ENCODE measurements at regions of chr11 and their contacts with region 1.

Region 1: GRCh38 chr11:79062814-79063762 is 377.7 kb downstream of the TENM4 start:
- DNase-seq: no peak
- H3K4me3 ChIP-seq: no peak overlapping the region
- H3K27ac ChIP-seq: no peak overlapping the region
- H3K4me1 ChIP-seq: peaks cover 0 to 7% (median 2%) of the 10 kb centered on the region in 4 donors
- H3K27me3 ChIP-seq: no peaks in the 10 kb centered on the region
- CTCF ChIP-seq: peak; percentile 17 to 38 (median 21)
- EP300 ChIP-seq: no peak
- POLR2A ChIP-seq: no peak

Region 2: DNA sequence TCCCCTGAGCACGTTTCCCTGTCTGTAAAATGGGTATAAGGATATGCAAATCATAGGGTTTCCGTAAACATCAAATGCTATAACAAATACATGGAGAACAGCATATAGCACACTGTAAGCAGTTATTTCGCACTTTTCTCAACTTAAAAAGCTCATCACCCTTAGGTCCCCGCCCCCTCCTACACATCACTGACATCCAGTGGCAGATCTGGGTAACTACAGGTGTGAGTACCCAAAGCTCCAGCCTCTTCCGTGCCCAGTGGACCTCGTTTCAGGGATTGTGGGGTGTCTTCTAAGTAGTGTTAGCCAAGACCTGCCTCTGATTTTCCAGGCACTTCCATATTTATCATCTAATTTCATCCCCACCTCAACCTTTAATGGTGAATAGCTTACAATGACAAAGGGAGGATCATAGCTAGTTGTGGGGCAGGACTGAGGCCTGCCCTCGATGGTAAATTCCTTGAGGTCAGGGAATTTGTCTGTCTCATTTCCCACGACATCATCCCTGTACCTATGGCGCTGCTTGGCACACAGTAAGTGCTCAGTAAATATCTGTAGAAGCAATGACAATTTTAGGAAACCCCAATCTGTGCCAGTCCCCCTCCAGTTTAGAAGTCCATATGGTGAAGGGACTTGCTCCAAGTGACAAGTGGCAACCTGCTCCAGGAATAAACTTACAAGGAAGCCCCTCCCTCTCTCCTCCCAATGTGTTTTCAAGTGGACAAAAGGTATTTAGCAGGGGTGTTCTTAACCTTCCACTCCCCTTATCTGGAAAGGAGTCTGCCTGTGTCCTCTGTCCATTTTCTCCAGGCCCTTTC is 37.2 kb after region 1 on chr11:
- intact Hi-C with region 1: loop called (anchors 2 kb)
- DNase-seq: no peak
- H3K4me3 ChIP-seq: no peak overlapping the region
- H3K27ac ChIP-seq: no peak overlapping the region
- H3K4me1 ChIP-seq: peaks cover 0 to 74% (median 39%) of the 10 kb centered on the region in 4 donors
- H3K27me3 ChIP-seq: no peaks in the 10 kb centered on the region
- CTCF ChIP-seq: peak; percentile 65 to 81 (median 75)
- EP300 ChIP-seq: no peak
- POLR2A ChIP-seq: no peak

Region 3: DNA sequence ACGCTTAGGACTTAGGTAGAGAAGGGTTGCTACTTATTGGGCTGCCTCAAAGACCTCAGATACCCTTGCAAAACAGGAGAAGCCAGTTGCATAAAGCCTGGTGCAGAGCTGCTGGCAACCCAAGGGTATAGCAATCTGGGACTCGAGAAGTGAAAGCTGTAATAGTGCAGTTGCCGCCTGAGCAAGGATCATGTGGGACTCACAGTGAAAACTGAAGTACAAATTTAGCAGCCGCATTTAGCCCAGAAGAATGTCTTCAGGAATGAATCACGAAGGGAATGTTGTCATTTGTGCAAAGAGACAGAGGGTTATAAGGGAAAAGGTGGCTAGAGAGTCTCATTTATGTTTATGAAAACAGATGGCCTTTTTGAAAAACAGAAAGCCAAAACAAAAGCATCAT is 110.5 kb after region 1 on chr11:
- intact Hi-C with region 1: loop called (anchors 10 kb)
- DNase-seq: no peak
- H3K4me3 ChIP-seq: peak overlapping the region in 1 of 4 donors; percentile 6
- H3K27ac ChIP-seq: peak overlapping the region; percentile 14 to 59 (median 44)
- H3K4me1 ChIP-seq: peaks cover 10 to 21% (median 16%) of the 10 kb centered on the region in 4 donors
- H3K27me3 ChIP-seq: no peaks in the 10 kb centered on the region
- CTCF ChIP-seq: no peak
- EP300 ChIP-seq: no peak
- POLR2A ChIP-seq: no peak

Measured in esophagus muscularis mucosa (tissue), 4 donors.